ENCODE measurements at regions of chr3 and their contacts with region 1.

Region 1: GRCh38 chr3:31562525-31562924 is 29.8 kb downstream of the STT3B start:
- DNase-seq: no peak
- CTCF ChIP-seq: no peak

Region 2: DNA sequence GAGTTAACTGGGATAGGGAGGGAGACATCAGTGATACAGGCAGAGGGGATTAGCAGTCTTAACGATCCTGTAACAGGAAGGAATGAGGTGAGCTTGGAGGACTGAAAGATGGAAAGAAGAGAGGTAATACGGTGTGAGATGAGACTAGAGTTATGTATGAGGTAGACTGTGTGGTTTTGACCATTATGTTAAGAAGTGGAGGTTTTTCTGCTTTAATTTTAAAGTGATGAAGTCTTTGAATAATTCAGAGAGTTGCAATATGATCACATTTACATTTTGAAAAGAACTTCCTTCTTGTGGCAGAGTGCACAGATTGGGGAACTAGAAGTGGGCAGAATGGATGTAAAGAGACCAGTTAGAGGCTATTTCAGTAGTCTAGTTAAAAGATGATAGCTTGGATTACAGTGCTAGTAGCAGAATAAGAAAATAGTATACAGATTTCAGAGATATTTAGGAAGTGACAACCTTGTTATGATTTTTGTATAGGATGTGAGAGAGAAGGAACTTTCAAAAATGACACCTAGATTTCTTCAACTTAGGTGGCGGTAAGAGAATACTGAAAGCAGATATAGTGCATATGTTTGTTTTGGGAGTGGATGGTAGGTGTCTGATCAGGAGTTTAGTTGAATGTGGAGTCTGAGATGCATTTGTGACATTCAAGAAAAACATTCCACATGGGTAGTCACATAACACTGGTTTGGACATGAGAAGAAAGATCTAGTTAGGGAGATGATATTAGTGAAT is 10.7 kb after region 1 on chr3:
- CTCF ChIA-PET with region 1: interaction called, 13 read pairs
- POLR2A ChIA-PET with region 1: no interaction called
- DNase-seq: no peak
- CTCF ChIP-seq: no peak

Region 3: DNA sequence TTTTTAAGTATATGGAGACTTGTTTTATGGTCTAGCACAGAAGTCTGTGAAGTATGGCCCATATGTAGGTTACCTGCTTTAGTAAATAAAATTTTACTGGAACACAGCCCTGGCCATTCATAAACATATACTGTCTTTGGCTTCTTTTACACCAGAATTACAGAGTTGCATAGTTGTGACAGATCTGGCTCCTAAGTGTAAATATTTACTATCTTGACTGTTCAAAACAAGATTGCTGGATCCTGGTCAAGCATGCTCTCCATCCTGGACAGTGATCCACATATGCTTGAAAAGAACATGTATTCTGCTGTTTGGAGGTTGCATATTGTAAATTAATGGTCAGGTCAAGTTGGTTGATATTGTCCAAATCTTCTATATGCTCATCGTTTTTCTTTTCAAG is 28.1 kb after region 1 on chr3:
- CTCF ChIA-PET with region 1: no interaction called
- POLR2A ChIA-PET with region 1: no interaction called
- DNase-seq: no peak
- CTCF ChIP-seq: no peak

Measured in GM10248 (cell line).